ENCODE measurements at regions of chr10 and their contacts with region 1.

Region 1: DNA sequence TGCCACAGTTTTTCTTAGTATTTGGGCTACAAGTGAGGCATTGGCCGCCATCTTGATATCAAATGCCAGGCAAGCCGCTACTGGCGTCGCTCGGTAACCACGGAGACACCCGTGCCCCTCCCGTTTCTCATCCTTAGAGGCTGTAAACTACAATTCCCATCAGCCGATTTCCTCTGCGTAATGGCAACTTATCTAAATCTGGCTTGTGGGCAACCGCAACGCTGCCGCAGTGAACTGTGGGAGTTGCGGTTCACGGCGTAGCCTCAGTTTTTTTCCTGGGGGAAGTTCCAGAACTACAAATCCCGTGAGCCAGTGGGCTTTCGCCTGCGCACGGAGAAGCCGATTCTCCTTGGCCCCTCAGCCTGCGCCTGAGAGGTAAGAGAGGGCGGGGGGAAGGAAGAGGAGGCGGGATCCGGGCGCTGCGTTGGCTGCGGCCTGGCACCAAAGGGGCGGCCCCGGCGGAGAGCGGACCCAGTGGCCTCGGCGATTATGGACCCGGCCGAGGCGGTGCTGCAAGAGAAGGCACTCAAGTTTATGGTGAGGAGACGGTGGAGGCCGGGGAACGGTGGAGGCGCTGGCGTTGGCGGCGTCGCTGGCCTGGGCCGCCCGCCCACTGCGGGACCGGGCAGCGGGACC is at the start of gene BTRC:
- DNase-seq: peak; percentile 90 to 99 (median 95)
- ATAC-seq: peak; percentile 96
- H3K4me3 ChIP-seq: peak within 1 kb of the TSS; percentile 84 to 86
- H3K4me3 Mint-ChIP-seq: peak within 1 kb of the TSS; percentile 99
- H3K27ac ChIP-seq: peak within 1 kb of the TSS; percentile 64 to 79
- H3K27ac Mint-ChIP-seq: peak within 1 kb of the TSS; percentile 97
- H3K4me1 ChIP-seq: peaks cover 6% of the 10 kb centered on the region
- H3K4me1 Mint-ChIP-seq: peaks cover 35% of the 10 kb centered on the region
- H3K27me3 ChIP-seq: no peaks in the 10 kb centered on the region
- H3K27me3 Mint-ChIP-seq: peaks cover 14% of the 10 kb centered on the region
- CTCF ChIP-seq: no peak
- total RNA-seq, gene BTRC: 8.5 to 9.3 TPM

Region 2: GRCh38 chr10:100986952-100987750 is 366.7 kb before region 1 on chr10 and contains the starts of genes MRPL43 and TWNK:
- CTCF ChIA-PET with region 1: no interaction called
- POLR2A ChIA-PET with region 1: no interaction called
- intact Hi-C with region 1: loop called in 1 of 2 experiments (anchors 5 kb)
- DNase-seq: peak; percentile 68 to 90 (median 87)
- ATAC-seq: peak; percentile 95
- H3K4me3 ChIP-seq: peak within 1 kb of the TSS; percentile 79 to 93
- H3K4me3 Mint-ChIP-seq: peak within 1 kb of the TSS; percentile 99
- H3K27ac ChIP-seq: peak within 1 kb of the TSS; percentile 51 to 64
- H3K27ac Mint-ChIP-seq: peak within 1 kb of the TSS; percentile 95
- H3K4me1 ChIP-seq: peaks cover 35% of the 10 kb centered on the region
- H3K4me1 Mint-ChIP-seq: peaks cover 46% of the 10 kb centered on the region
- H3K27me3 ChIP-seq: no peaks in the 10 kb centered on the region
- H3K27me3 Mint-ChIP-seq: no peaks in the 10 kb centered on the region
- CTCF ChIP-seq: no peak
- total RNA-seq, gene MRPL43: 28.3 to 28.4 TPM
- total RNA-seq, gene TWNK: 4.6 to 4.7 TPM

Region 3: DNA sequence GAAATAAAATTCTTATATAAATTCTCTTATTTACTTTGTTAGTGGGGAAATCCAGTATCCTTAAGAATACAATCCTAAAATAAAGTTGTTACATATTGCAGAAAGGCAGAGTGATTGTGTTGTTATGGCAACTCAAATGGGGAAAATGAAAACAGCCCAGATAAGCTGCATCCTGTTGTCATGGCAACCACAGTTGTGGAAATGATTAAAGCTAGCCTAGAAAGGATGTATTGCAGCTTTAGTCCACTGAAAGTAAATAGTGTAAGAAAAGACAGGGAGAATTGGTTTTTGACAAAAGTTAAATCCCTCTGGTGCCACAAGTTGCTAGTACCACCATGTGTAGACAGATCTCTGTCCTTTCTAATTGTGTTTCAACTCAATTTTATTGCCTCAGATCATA is 43.3 kb after region 1 on chr10:
- CTCF ChIA-PET with region 1: no interaction called
- POLR2A ChIA-PET with region 1: no interaction called
- intact Hi-C with region 1: loop called in 1 of 2 experiments (anchors 5 kb)
- DNase-seq: peak in 6 of 9 experiments; percentile 16 to 83 (median 32)
- ATAC-seq: peak; percentile 57
- H3K4me3 ChIP-seq: no peak overlapping the region
- H3K4me3 Mint-ChIP-seq: no peak overlapping the region
- H3K27ac ChIP-seq: no peak overlapping the region
- H3K27ac Mint-ChIP-seq: no peak overlapping the region
- H3K4me1 ChIP-seq: no peaks in the 10 kb centered on the region
- H3K4me1 Mint-ChIP-seq: peaks cover 28% of the 10 kb centered on the region
- H3K27me3 ChIP-seq: no peaks in the 10 kb centered on the region
- H3K27me3 Mint-ChIP-seq: no peaks in the 10 kb centered on the region
- CTCF ChIP-seq: no peak

Region 4: DNA sequence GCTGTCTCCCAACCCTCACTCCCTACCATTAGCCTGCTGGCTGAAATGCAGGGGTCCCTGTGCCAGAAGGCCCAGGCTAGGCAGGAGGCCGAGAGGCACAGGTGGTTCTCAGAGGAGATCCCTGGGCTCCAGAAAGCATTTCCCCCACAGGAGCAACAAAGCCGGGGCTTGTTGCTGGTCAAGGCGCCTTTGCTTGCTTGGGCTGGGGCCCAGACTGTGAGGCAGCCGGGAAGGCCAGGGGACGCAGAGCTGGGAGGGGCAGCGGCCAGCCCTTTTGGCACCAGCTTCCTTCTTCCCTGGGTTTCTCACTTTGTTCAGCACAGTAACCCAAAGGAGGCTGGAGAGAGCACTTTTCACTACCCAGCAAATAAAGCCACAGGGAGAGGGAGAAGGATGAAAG is 292.6 kb after region 1 on chr10:
- CTCF ChIA-PET with region 1: no interaction called
- POLR2A ChIA-PET with region 1: no interaction called
- intact Hi-C with region 1: no loop called
- DNase-seq: no peak
- ATAC-seq: no peak
- H3K4me3 ChIP-seq: no peak overlapping the region
- H3K4me3 Mint-ChIP-seq: no peak overlapping the region
- H3K27ac ChIP-seq: no peak overlapping the region
- H3K27ac Mint-ChIP-seq: no peak overlapping the region
- H3K4me1 ChIP-seq: no peaks in the 10 kb centered on the region
- H3K4me1 Mint-ChIP-seq: peaks cover 26% of the 10 kb centered on the region
- H3K27me3 ChIP-seq: no peaks in the 10 kb centered on the region
- H3K27me3 Mint-ChIP-seq: no peaks in the 10 kb centered on the region
- CTCF ChIP-seq: no peak

Region 5: DNA sequence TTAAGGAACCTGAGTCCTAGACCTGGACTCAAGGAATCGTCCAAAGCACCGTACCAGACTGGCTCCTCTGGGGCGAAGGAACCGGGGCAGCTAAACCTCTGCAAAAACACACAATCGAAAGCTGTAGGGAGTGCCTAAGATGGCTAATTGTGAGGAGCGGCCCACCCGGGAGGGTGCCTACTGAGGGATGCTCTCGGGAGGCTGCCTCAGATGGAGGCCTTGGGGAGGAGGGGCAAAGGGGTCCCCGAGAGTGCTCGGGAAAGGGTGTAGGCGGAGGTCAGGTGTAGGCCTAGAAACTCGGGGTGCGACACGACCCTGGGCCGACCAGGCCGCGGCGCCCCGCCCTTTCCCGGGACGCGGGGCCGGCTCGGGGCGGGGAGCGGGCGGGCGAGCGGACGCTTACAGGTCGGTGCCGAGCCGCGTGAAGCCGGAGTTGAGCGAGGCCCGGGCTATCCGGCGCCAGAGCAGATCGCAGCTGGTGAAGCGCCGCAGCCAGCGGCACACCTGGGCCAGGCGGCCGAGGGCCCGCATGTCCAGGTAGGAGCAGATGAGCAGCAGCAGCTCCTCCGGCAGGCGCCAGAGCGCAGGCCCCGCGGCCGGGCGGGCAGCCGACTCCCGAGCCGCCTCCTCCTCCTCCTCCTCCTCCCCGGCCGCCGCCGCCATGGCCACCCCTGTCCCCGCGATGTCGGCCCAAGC is 340.3 kb after region 1 on chr10:
- CTCF ChIA-PET with region 1: no interaction called
- POLR2A ChIA-PET with region 1: no interaction called
- intact Hi-C with region 1: loop called (anchors 2 to 10 kb)
- DNase-seq: peak; percentile 42 to 83 (median 70)
- ATAC-seq: peak; percentile 66
- H3K4me3 ChIP-seq: peak overlapping the region; percentile 85 to 88
- H3K4me3 Mint-ChIP-seq: peak overlapping the region; percentile 97
- H3K27ac ChIP-seq: peak overlapping the region; percentile 97 to 99
- H3K27ac Mint-ChIP-seq: peak overlapping the region; percentile 99
- H3K4me1 ChIP-seq: peaks cover 36% of the 10 kb centered on the region
- H3K4me1 Mint-ChIP-seq: peaks cover 48% of the 10 kb centered on the region
- H3K27me3 ChIP-seq: no peaks in the 10 kb centered on the region
- H3K27me3 Mint-ChIP-seq: no peaks in the 10 kb centered on the region
- CTCF ChIP-seq: no peak

Region 6: DNA sequence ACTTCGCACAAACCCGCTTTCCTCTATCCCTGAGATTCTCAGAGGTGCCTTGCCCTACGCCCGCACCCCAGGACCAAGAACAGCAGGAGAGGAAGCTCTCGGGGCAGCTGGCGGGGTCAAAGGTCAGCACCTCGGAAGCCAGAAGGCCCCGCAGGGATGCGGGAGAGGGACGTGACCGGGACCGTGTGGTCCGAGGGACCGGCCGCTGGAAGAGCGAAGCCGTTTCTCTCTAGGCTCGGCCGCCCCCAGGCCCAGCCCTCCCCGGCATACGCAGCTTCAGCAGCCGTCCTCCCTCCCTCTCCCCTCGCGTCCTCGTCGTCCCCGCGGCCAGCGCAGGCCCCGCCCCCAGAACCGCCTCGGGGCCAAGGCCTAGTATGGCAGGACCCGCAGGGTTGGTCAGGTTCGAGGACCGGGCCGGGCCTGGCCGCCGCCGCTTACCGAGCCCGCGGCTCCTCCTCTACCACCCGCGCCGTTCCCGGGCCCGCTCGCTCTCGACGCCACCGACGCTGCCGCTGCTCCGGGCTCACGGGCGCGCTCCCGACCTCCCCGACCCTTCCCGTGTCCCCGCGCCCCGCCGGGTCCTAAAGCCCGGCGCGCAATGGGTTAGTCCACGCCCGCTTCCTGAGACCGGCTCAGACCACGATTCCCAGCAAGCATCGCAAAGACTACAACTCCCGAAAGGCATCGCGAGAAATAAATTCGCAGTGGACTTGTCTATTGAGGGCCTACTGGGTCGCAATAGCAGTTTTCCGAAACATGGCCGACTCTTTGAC is 702.0 kb after region 1 on chr10 and contains the start of gene ARMH3:
- CTCF ChIA-PET with region 1: no interaction called
- POLR2A ChIA-PET with region 1: no interaction called
- intact Hi-C with region 1: loop called in 1 of 2 experiments (anchors 10 kb)
- DNase-seq: peak; percentile 75 to 95 (median 87)
- ATAC-seq: peak; percentile 93
- H3K4me3 ChIP-seq: peak within 1 kb of the TSS; percentile 93 to 94
- H3K4me3 Mint-ChIP-seq: peak within 1 kb of the TSS; percentile 97
- H3K27ac ChIP-seq: peak within 1 kb of the TSS; percentile 79 to 90
- H3K27ac Mint-ChIP-seq: peak within 1 kb of the TSS; percentile 95
- H3K4me1 ChIP-seq: peaks cover 40% of the 10 kb centered on the region
- H3K4me1 Mint-ChIP-seq: peaks cover 42% of the 10 kb centered on the region
- H3K27me3 ChIP-seq: no peaks in the 10 kb centered on the region
- H3K27me3 Mint-ChIP-seq: no peaks in the 10 kb centered on the region
- CTCF ChIP-seq: no peak
- total RNA-seq, gene ARMH3: 18.6 to 20.6 TPM

Region 7: DNA sequence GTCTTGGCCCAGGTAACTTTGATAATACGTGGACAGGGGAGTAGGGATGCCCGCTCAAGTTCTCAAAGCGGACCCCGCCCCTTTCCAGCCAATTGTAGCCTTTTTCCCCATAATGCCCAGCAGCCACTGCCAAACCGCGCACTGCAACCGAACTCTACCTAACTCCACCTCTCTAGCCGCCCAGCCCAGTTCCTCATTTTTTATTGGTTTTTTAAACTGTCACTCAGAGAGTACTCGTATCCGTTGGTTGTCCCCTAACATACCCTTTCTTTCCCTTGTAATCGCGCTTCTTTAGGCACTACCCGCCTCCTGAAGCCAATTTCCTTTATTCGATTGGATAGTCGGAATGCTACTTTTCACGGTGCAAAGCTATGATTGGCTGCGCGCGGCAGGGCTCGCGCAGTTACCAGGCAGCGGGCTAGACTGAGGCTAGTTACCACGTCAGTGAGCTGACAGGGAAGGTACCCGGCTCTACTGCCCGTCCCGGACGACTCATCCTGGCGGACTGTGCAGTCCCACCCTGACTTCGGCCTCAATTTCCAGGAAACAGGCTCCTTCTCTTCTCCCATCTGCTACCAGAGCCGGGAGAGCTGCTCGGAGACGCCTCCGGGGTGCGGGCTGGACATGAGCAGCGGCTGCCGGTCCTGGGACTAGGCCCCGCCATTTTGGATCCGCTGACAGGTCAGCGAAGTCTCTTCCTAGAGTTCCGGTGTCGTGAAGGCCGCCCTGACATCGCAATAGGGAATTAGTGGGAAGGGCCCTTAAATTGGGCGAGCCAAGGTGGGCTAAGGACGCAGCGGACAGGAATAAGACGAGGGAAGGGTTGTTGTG is 891.5 kb after region 1 on chr10 and contains the start of gene GBF1:
- CTCF ChIA-PET with region 1: no interaction called
- POLR2A ChIA-PET with region 1: no interaction called
- intact Hi-C with region 1: loop called in 1 of 2 experiments (anchors 5 kb)
- DNase-seq: peak; percentile 75 to 98 (median 87)
- ATAC-seq: peak; percentile 84
- H3K4me3 ChIP-seq: peak within 1 kb of the TSS; percentile 82 to 95
- H3K4me3 Mint-ChIP-seq: peak within 1 kb of the TSS; percentile 94
- H3K27ac ChIP-seq: peak within 1 kb of the TSS; percentile 89 to 93
- H3K27ac Mint-ChIP-seq: peak within 1 kb of the TSS; percentile 92
- H3K4me1 ChIP-seq: peaks cover 44% of the 10 kb centered on the region
- H3K4me1 Mint-ChIP-seq: peaks cover 54% of the 10 kb centered on the region
- H3K27me3 ChIP-seq: peaks cover 10 to 22% of the 10 kb centered on the region in 2 experiments
- H3K27me3 Mint-ChIP-seq: peaks cover 19% of the 10 kb centered on the region
- CTCF ChIP-seq: no peak
- total RNA-seq, gene GBF1: 26.7 to 31.3 TPM

Region 8: DNA sequence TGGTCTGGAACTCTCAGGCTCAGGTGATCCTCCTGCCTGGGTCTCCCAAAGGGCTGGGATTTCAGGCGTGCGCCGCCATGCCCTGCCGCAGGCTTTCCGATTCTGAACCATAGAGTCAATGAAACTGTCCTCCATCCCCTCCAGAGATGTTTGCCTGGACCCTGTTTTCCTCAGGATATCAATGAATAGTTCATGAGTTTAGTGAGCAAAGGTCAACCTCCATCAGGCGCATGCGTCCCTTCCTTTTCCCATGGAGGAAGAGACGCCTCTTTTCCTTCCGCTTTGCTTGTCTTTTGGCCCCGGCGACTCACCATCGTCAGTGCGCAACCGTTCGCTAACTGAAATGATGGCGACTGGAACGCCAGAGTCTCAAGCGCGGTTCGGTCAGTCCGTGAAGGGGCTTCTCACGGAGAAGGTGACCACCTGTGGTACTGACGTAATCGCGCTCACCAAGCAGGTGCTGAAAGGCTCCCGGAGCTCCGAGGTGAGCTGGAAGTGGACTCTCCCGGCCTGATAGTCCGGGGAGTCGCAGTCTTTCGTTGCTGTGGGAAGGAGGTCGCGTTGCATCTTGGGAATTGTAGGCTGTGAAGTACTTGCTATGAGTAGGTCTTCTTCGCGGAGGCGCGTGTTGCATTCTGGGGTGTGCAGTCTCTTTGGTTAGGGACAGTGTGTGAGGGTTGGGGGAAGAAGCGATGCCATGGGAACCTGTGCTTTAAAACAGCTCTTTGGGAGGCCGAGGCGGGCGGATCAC is 1500.3 kb after region 1 on chr10 and contains the start of gene BORCS7:
- CTCF ChIA-PET with region 1: no interaction called
- POLR2A ChIA-PET with region 1: no interaction called
- intact Hi-C with region 1: loop called in 1 of 2 experiments (anchors 10 kb)
- DNase-seq: peak; percentile 68 to 95 (median 87)
- ATAC-seq: peak; percentile 99
- H3K4me3 ChIP-seq: peak within 1 kb of the TSS; percentile 99
- H3K4me3 Mint-ChIP-seq: peak within 1 kb of the TSS; percentile 99
- H3K27ac ChIP-seq: peak within 1 kb of the TSS; percentile 90 to 98
- H3K27ac Mint-ChIP-seq: peak within 1 kb of the TSS; percentile 99
- H3K4me1 ChIP-seq: peaks cover 5% of the 10 kb centered on the region
- H3K4me1 Mint-ChIP-seq: peaks cover 17% of the 10 kb centered on the region
- H3K27me3 ChIP-seq: no peaks in the 10 kb centered on the region
- H3K27me3 Mint-ChIP-seq: no peaks in the 10 kb centered on the region
- CTCF ChIP-seq: no peak
- total RNA-seq, gene BORCS7: 13.7 to 13.9 TPM